B cell (primary cell): ENCODE measurements at regions of chr2 and their contacts with region 1.

Region 1: DNA sequence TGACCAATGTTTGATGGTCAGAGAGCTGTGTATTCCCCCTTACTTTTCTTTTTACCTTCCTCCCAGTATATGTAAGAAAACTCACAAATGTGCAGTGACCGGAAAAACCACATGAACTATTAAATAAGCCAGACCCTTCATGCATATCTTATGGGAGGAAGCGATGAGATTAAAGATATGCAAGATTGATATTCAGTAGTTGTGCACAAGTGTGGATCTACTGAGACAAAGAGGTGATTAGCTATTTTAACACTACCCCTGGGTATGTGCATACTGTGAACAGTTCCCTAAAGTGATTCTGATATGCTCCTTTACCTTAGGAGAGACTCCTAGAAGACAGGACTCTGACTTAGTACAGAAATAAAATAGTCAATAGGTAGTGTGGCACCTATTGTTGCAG is 328.3 kb downstream of the EPHA4 start:
- DNase-seq: no peak
- ATAC-seq: peak; percentile 7
- H3K4me3 ChIP-seq: no peak overlapping the region
- H3K4me3 Mint-ChIP-seq: peak overlapping the region; percentile 45
- H3K27ac ChIP-seq: no peak overlapping the region
- H3K27ac Mint-ChIP-seq: no peak overlapping the region
- H3K4me1 ChIP-seq: peaks cover 4 to 8% of the 10 kb centered on the region in 2 donors
- H3K4me1 Mint-ChIP-seq: peaks cover 10% of the 10 kb centered on the region
- H3K27me3 ChIP-seq: no peaks in the 10 kb centered on the region
- H3K27me3 Mint-ChIP-seq: peaks cover 33% of the 10 kb centered on the region
- CTCF ChIP-seq: no peak

Region 2: GRCh38 chr2:221210686-221211085 is 33.1 kb before region 1 on chr2:
- CTCF ChIA-PET with region 1: no interaction called
- POLR2A ChIA-PET with region 1: no interaction called
- intact Hi-C with region 1: loop called (anchors 1 kb)
- DNase-seq: no peak
- ATAC-seq: no peak
- H3K4me3 ChIP-seq: no peak overlapping the region
- H3K4me3 Mint-ChIP-seq: no peak overlapping the region
- H3K27ac ChIP-seq: no peak overlapping the region
- H3K27ac Mint-ChIP-seq: no peak overlapping the region
- H3K4me1 ChIP-seq: no peaks in the 10 kb centered on the region
- H3K4me1 Mint-ChIP-seq: no peaks in the 10 kb centered on the region
- H3K27me3 ChIP-seq: no peaks in the 10 kb centered on the region
- H3K27me3 Mint-ChIP-seq: no peaks in the 10 kb centered on the region
- CTCF ChIP-seq: no peak